Cardiac septum (tissue), 1 donor: ENCODE measurements at regions of chr17 and their contacts with region 1.

Region 1: GRCh38 chr17:48751172-48751571 is 22.6 kb upstream of the HOXB13 start:
- DNase-seq: no peak

Region 2: GRCh38 chr17:48718761-48719641 is 32.2 kb before region 1 on chr17:
- intact Hi-C with region 1: loop called (anchors 2 kb)
- DNase-seq: peak; percentile 63

Region 3: GRCh38 chr17:48883171-48883570 is 132.0 kb after region 1 on chr17:
- intact Hi-C with region 1: no loop called
- DNase-seq: no peak